HCT116 (cell line): ENCODE measurements at regions of chr7 and their contacts with region 1.

Region 1: GRCh38 chr7:90403174-90404113 is at the start of gene CLDN12:
- DNase-seq: peak; percentile 82
- ATAC-seq: peak; percentile 100
- H3K4me3 ChIP-seq: peak within 1 kb of the TSS; percentile 63 to 75
- H3K27ac ChIP-seq: peak within 1 kb of the TSS; percentile 64
- H3K4me1 ChIP-seq: peaks cover 3 to 11% of the 10 kb centered on the region in 2 experiments; a peak in 3 of 4 replicates
- H3K27me3 ChIP-seq: no peaks in the 10 kb centered on the region
- CTCF ChIP-seq: no peak
- POLR2A ChIP-seq: peak; percentile 87
- RAD21 ChIP-seq: no peak
- total RNA-seq, gene CLDN12: 30.6 TPM

Region 2: GRCh38 chr7:90346336-90347125 is 56.9 kb before region 1 on chr7 and contains the start of gene GTPBP10:
- CTCF ChIA-PET with region 1: no interaction called
- POLR2A ChIA-PET with region 1: no interaction called
- RAD21 ChIA-PET with region 1: no interaction called
- intact Hi-C with region 1: loop called (anchors 1 kb)
- DNase-seq: peak; percentile 91
- ATAC-seq: peak; percentile 98
- H3K4me3 ChIP-seq: peak within 1 kb of the TSS; percentile 97 to 99
- H3K27ac ChIP-seq: peak within 1 kb of the TSS; percentile 45
- H3K4me1 ChIP-seq: peaks cover 0 to 14% of the 10 kb centered on the region in 2 experiments; a peak in 2 of 4 replicates
- H3K27me3 ChIP-seq: no peaks in the 10 kb centered on the region
- CTCF ChIP-seq: peak in 2 of 3 experiments; percentile 66 to 69; a peak in 4 of 6 replicates
- POLR2A ChIP-seq: peak; percentile 70
- RAD21 ChIP-seq: peak; percentile 15; the same call in 1 of the 2 replicates
- total RNA-seq, gene GTPBP10: 36.7 TPM